ENCODE measurements at regions of chr22 and their contacts with region 1.

Region 1: GRCh38 chr22:30485362-30485988 is 13.7 kb upstream of the SEC14L3 start:
- H3K4me3 Mint-ChIP-seq: no peak overlapping the region
- H3K27ac Mint-ChIP-seq: no peak overlapping the region
- H3K4me1 Mint-ChIP-seq: no peaks in the 10 kb centered on the region
- H3K27me3 Mint-ChIP-seq: peaks cover 19% of the 10 kb centered on the region

Region 2: GRCh38 chr22:30433773-30434172 is 51.7 kb before region 1 on chr22:
- intact Hi-C with region 1: no loop called
- H3K4me3 Mint-ChIP-seq: no peak overlapping the region
- H3K27ac Mint-ChIP-seq: no peak overlapping the region
- H3K4me1 Mint-ChIP-seq: peaks cover 6% of the 10 kb centered on the region
- H3K27me3 Mint-ChIP-seq: peaks cover 14% of the 10 kb centered on the region

Region 3: GRCh38 chr22:30444632-30445437 is 40.6 kb before region 1 on chr22:
- intact Hi-C with region 1: loop called (anchors 2 kb)
- H3K4me3 Mint-ChIP-seq: no peak overlapping the region
- H3K27ac Mint-ChIP-seq: no peak overlapping the region
- H3K4me1 Mint-ChIP-seq: peaks cover 32% of the 10 kb centered on the region
- H3K27me3 Mint-ChIP-seq: peaks cover 82% of the 10 kb centered on the region

Region 4: DNA sequence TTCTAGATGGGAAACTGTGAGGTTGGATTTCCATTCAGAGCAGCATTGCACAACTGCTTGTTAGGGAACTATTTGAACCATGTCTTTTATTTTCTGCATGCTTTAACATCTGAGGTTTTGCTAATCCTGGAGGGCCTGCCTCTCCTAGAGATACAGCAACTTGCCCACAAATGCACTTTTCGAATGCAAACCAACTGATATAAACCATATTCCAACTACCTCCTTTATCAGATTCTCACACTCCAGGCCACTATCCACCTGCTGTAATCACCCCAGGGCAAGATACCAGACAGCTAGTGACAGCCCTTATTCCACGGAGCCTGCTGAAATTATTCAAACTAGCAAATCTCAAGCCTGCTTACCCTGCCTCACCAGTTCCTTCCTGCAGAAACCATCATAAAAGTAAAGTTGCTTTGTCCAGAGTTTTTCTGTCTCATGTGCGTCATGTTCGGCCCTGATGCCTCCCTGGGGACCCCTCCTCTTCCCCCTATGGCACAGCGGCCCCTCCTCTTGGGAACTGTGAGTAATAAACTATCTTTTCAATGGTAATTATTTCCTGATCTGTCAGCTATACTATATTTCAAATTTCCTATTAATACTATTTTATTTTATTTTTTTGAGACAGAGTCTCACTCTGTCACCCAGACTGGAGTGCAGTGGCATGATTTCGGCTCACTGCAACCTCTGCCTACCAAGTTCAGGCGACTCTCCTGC is 38.5 kb after region 1 on chr22:
- intact Hi-C with region 1: no loop called
- H3K4me3 Mint-ChIP-seq: no peak overlapping the region
- H3K27ac Mint-ChIP-seq: no peak overlapping the region
- H3K4me1 Mint-ChIP-seq: no peaks in the 10 kb centered on the region
- H3K27me3 Mint-ChIP-seq: peaks cover 5% of the 10 kb centered on the region

Region 5: DNA sequence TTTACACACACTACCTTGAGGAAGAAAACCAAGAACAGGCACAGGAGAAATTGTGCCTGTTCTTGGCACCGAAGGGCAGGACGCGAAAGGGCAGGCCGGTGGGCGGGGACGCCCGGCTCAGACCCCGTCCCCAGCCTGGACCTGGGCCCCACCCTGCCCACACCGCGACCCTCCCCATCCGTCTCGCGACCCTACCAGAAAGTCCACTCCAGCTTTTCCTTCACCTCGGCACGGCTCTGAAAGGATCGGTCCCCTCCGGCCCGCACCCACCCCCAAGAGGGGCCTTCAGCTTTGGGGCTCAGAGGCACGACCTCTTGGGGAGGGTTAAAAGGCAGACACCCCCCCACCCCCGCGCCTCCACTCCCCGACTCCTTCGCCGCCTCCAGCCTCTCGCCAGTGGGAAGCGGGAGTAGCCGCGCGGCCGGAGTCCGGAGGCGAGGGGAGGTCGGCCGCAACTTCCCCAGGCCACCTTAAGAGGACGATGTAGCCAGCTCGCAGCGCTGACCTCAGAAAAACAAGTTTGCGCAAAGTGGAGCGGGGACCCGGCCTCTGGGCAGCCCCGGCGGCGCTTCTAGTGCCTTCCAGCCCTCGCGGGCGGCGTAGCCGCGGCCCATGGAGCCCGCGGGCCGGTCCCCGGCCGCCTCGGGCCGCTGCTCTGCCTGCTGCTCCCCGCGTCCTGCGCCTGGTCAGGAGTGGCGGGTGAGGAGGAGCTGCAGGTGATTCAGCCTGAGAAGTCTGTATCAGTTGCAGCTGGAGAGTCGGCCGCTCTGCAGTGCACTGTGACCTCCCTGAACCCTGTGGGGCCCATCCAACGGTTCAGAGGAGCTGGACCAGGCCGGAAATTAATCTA is 56.7 kb after region 1 on chr22:
- intact Hi-C with region 1: no loop called
- H3K4me3 Mint-ChIP-seq: no peak overlapping the region
- H3K27ac Mint-ChIP-seq: no peak overlapping the region
- H3K4me1 Mint-ChIP-seq: no peaks in the 10 kb centered on the region
- H3K27me3 Mint-ChIP-seq: peaks cover 51% of the 10 kb centered on the region

Region 6: GRCh38 chr22:30602049-30602448 is 116.6 kb after region 1 on chr22:
- intact Hi-C with region 1: no loop called
- H3K4me3 Mint-ChIP-seq: no peak overlapping the region
- H3K27ac Mint-ChIP-seq: no peak overlapping the region
- H3K4me1 Mint-ChIP-seq: peaks cover 29% of the 10 kb centered on the region
- H3K27me3 Mint-ChIP-seq: no peaks in the 10 kb centered on the region

Measured in dendritic cell treated with granulocyte-macrophage colony-stimulating factor and Interleukin-4, amounts not matched to agents 40 ng/mL and 50 ng/mL, for 4 days (primary cell).